Right ventricle myocardium inferior (tissue), 1 donor: ENCODE measurements at regions of chr1 and their contacts with region 1.

Region 1: DNA sequence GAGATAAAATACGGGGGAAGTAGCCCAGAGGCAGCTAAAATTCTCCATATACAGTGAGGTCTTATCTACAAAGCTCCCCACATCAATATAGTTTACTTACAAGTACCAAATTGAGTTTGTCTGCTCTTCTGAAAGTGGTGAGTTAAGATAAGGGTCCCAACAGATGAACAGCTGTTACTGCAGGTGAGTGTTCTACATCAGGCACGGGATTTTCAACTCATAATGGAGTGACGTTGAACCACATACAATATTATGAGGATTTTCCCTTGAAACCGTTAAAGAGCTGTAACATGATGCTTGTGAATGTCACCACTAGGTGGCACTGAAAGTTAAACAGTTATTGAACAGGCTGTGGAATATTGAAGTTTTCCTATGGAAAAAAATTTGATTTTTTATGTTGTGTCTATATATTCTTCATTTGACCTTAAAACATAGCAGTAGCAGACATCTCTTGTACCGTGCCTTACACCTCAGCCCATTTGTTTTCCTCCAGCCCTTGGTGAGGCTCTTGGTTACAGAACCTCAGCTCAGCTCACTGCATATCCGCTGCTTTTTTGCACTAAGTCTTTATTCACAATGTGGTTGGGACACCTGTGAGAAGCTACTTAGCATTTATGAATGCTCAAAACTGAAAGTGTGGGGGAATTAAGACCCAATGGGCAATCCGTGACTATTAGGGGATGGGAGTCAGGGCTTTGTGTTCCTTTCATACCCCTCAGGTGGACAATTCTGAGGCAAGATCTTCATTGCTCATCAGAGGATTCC is 23.2 kb downstream of the CD1D start:
- DNase-seq: no peak
- ATAC-seq: no peak

Region 2: DNA sequence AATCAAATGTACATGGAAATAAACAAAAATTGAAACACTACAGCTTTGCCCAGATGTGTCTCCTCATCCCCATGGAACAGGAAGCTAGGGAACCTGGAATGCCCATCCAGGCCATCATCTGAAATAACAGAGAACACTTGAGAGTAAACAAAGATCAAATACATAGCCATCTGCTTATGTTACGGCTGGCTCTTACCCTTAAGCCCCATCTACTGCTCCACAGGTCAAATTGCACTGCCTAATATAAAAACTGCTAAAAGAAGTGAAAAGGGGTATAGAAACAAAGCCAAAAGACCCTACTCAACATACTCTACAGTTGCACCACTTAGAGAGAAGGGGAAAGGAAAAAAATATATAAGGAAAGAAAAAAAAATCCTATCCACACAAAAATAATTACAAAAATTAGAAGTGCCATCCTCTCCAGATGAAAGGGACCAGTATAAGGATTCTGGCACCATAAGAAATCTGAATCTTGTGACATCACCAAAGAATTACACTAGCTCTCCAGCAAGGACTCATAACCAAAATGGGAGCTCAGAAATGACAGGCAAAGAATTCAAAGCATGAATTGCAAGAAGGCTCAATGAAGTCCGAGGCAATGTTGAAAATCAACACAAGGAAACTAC is 323.4 kb after region 1 on chr1:
- intact Hi-C with region 1: loop called (anchors 2 kb)
- DNase-seq: no peak
- ATAC-seq: no peak

Region 3: DNA sequence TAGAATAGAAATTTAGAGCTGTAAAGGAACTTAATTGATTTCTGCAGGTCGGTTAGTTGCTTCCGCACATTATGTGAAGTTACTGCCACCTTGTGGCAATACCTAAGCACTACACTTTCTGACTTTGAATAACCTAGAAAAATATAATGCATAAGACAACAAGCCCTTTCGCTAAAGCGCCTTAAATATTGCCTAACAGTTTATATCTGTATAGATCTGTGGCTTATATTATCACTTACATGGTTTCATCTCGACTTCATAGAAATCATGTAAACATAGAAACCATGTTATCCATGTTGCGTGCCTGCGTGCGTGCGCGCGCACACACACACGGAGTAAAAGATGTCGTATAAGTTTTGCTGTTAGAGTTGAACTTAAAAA is 794.9 kb after region 1 on chr1:
- intact Hi-C with region 1: loop called (anchors 2 kb)
- DNase-seq: peak; percentile 82
- ATAC-seq: peak; percentile 48

Region 4: GRCh38 chr1:159071970-159072582 is 868.2 kb after region 1 on chr1:
- intact Hi-C with region 1: loop called (anchors 5 kb)
- DNase-seq: no peak
- ATAC-seq: peak; percentile 56